Posterior cingulate gyrus (tissue), 11 donors: ENCODE measurements at regions of chr6 and their contacts with region 1.

Region 1: DNA sequence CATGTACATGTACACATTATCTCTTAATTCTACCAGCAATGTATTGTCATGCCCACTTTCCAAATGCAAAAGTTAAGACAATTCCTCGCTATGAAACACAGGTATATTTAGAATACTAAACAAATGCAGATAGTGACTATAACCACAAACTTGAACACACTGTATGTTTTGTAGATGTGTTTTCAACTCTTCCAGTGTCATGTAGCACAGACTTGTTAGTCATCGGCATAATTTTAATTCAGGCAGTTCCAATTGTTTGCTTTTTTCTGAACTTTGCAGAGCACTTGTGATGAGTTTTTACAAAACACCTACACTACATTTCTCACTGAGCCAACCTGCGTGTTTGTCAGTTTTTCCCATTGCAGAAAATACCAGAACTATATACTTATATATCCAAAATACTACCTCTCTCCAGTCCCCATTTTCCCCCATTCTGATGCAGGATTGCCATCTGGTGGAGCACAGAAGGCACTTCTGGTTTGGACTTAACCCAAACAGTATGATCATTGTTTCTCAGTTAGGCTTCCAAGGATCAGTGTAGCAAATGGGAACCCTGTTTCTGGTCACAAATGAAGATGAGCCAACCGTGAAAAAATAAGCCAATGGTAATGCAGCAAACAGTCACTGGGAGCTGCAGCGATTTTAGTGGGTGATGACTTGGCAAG is 143.4 kb downstream of the ADGRB3 start:
- DNase-seq: peak in 7 of 10 donors; percentile 12 to 81 (median 54)

Region 2: GRCh38 chr6:68343901-68344300 is 434.6 kb before region 1 on chr6:
- intact Hi-C with region 1: loop called (anchors 5 kb)
- DNase-seq: peak in 2 of 10 donors; percentile 13 to 28

Region 3: DNA sequence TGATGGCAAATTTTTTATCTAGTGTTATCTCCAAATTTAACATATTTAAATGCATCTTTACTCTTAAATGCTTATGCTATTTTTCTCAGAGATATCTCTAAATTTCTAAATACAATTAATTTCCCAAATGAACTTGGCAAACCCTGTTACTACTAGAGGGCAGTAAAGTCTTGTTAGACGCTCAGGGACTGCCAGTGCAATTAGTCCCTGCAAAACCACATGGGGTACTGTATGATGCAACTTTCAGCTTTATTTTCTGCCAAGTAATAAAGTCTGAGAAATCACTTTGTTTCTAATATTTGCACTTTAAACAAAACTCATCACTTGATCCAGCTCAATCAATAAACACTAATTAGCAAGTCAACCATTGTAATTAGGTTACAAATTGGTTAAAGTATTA is 219.4 kb before region 1 on chr6:
- intact Hi-C with region 1: loop called (anchors 2 kb)
- DNase-seq: no peak

Region 4: DNA sequence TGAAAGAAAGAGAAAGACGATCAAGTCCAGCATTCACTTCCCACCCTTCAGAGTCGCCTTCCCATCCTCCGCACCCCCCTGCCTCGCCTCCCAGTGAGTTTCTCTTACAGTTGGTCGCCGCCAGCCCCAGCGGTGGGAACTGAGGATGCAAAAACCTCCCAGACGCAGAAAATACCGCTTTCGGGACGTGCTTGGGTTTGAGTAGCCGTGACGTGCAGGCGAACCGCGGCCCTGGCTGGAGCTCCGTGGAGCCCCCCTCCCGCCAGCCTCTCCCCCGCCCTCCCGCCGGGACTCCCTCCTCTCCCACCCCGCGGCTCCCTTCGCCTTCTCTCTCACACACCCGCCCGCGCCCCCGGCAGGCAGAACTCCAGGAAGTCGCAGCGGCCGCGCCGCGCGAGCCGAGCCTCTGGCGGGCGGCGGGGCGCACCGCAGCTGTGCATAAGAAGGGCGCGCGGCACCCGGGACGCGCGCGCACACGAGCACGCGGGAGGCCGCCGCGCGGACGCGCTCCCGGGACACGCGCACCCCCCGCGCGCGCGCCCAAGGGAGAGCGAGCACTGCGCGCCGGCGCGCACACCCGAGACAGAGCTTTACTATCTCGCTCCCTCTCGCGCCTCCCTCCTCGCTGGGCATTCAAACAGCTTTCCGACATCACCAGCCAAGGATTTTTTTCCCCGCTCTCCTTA is 143.6 kb before region 1 on chr6 and contains the start of gene ADGRB3:
- intact Hi-C with region 1: loop called (anchors 1 kb)
- DNase-seq: peak; percentile 83 to 99 (median 92)

Region 5: GRCh38 chr6:68728159-68728979 is 50.1 kb before region 1 on chr6:
- intact Hi-C with region 1: loop called (anchors 5 kb)
- DNase-seq: no peak

Region 6: GRCh38 chr6:68967549-68968300 is 189.2 kb after region 1 on chr6:
- intact Hi-C with region 1: loop called (anchors 5 kb)
- DNase-seq: peak in 7 of 10 donors; percentile 27 to 83 (median 51)

Region 7: DNA sequence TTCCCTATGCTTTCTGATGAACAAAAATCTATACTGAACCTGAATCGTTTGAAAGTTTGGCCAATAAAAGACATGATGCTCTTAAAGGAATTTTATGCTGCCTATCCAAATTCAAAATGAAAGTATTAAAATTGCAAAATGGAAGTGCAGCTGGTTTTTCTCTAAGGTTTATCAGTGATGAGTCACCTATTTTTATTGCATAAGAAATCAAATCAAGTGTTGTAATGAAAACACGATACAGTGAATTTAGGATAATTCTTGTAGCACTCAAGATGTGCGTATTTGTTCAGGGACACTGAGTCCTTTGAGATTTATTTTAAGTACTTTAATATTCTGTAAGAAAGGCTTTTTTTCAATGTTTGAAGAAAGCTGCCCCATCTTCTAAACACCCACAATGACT is 266.0 kb after region 1 on chr6:
- intact Hi-C with region 1: no loop called
- DNase-seq: no peak